ENCODE measurements at regions of chr6 and their contacts with region 1.

Region 1: GRCh38 chr6:33161354-33162331 is 30.6 kb downstream of the COL11A2 start:
- DNase-seq: peak; percentile 93
- H3K4me3 ChIP-seq: peak overlapping the region; percentile 44 to 57
- H3K27ac ChIP-seq: no peak overlapping the region
- H3K4me1 ChIP-seq: peaks cover 0 to 7% of the 10 kb centered on the region in 2 experiments; a peak in 1 of 4 replicates
- H3K27me3 ChIP-seq: no peaks in the 10 kb centered on the region; the same call in 1 of the 2 replicates
- CTCF ChIP-seq: peak; percentile 85
- EP300 ChIP-seq: no peak
- RAD21 ChIP-seq: peak; percentile 68

Region 2: DNA sequence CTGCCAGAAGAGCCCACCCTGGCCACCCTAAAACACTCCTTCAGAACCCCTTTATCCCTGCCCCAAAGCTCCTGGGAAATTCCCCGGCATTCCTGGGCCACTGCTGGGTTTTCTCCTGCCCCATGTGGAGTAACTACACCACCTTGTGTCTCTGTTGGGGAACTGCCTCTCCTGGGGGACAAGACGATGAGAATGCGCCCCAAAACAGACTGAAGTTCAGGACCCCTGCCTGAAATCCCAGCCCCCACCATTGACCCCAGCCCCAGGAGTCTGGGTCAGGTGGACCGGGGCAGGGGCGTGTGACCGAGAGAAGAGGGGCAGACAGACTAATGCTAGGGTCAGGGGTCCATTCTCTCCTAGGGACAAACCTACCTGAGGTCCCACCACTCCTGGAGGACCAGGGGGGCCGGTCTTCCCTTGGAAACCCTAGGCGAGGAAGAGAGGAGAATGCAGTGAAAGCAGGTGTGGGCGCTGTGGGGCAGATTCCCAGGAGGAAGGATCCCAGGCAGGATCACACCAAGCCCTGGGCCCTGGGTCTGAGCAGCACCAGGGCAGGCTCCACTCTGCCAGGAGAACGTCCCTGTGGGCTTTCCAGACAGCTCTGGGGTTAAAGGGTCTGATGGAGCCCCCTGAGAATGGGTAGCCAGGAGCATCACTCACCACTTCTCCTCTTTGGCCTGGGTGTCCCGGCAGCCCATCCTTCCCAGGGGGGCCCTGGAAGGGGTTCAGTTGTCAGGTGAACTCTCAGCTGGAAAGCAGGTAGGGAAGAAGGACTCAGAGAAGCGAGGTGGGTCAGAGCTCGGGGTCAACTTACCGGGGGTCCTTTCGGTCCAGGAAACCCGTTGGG is 11.3 kb after region 1 on chr6:
- CTCF ChIA-PET with region 1: interaction called, 34 read pairs
- POLR2A ChIA-PET with region 1: no interaction called
- DNase-seq: no peak
- H3K4me3 ChIP-seq: no peak overlapping the region
- H3K27ac ChIP-seq: no peak overlapping the region
- H3K4me1 ChIP-seq: peaks cover 0 to 3% of the 10 kb centered on the region in 2 experiments; a peak in 1 of 4 replicates
- H3K27me3 ChIP-seq: no peaks in the 10 kb centered on the region
- CTCF ChIP-seq: peak; percentile 54
- EP300 ChIP-seq: no peak
- RAD21 ChIP-seq: peak; percentile 60

Region 3: GRCh38 chr6:33185654-33186187 is 24.1 kb after region 1 on chr6:
- CTCF ChIA-PET with region 1: interaction called, 14 read pairs
- POLR2A ChIA-PET with region 1: no interaction called
- DNase-seq: no peak
- H3K4me3 ChIP-seq: no peak overlapping the region
- H3K27ac ChIP-seq: no peak overlapping the region
- H3K4me1 ChIP-seq: no peaks in the 10 kb centered on the region; a peak in 1 of 4 replicates
- H3K27me3 ChIP-seq: no peaks in the 10 kb centered on the region
- CTCF ChIP-seq: no peak
- EP300 ChIP-seq: no peak
- RAD21 ChIP-seq: no peak

Region 4: DNA sequence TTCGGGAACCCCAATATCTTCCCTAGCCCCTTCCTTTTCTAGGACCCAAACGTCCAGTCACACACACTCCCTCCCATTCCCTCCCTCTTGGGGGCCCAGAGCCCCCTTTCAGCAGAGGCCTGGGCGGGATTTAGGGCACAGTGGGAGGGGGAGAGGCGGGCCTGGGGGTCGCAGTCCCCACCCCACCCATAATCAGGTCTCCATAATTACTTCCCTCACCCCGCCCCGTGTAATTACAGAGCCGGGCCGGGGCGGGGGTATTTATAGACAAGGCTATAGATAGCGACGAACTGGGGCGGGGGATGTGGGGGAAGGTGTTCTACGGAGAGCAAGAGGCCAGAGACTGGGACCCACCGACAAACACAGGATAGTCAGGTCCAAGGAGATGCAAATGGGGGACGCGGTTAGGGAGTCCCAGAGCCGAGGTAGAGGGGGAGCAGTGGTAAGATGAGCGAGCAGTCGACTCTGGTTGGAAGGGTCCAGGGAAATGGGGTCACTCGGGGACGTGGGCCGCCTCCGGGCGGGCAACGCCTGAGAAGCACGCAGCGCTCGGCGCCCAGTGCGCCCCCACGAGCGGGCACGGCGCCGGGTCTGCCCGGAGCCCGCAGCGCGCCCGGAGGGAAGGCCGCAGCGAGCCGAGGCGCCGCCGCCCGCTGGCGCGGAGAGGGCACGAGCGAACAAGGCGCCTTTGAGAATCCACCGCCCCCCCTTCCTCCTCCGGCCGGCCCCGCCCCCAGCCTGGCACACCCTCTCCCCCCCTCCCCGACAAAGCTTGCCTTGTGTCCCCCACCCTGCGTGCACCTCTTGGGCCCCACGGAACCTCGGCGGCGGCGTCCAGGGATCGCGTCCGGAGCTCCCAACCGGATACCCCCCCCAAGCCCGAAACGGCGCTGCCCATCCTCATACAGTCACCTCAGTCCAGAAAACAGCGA is 31.3 kb after region 1 on chr6:
- CTCF ChIA-PET with region 1: interaction called, 50 read pairs
- POLR2A ChIA-PET with region 1: no interaction called
- DNase-seq: peak; percentile 75
- H3K4me3 ChIP-seq: no peak overlapping the region; a peak in 1 of 4 replicates
- H3K27ac ChIP-seq: no peak overlapping the region
- H3K4me1 ChIP-seq: peaks cover 0 to 22% of the 10 kb centered on the region in 2 experiments; a peak in 1 of 4 replicates
- H3K27me3 ChIP-seq: no peaks in the 10 kb centered on the region
- CTCF ChIP-seq: no peak
- EP300 ChIP-seq: no peak
- RAD21 ChIP-seq: no peak

Region 5: DNA sequence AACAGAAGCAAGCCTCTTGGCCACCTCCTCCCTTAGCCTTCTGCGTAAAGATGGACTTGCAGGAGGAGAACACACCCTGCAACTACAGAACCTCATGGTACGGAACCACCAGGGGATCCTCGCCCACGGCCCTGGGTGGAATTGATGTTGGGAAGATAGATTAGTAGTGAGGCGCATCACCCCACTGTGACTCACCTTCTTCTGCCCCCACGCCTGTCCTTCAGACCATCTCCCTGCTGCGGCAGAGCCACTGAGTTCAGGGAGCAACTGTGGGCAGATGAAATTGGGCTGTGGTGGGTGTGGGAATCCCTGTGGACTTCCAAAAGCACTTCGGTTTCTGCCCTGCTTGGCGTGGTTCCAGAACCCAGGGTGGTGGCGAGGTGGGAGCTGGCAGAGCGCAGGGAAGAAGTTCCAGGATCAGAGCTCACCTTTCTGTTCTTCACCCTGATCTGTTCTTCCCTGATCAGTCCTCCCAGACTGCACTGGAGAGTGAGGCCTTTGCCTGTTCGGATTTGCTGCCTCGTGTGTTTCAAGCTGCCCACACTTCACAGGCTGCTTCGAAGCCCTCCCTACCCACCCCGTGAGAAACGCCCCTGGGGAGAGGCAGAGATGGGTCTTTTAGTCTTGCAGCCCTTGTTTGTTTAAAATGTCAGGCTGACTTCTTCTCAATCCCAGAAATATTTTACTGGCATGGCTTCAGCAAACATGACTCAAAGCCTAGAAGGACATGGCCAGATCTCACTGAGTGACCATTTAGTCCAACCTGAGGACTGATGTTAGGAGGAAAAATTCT is 734.9 kb after region 1 on chr6:
- CTCF ChIA-PET with region 1: no interaction called
- POLR2A ChIA-PET with region 1: no interaction called
- DNase-seq: no peak
- H3K4me3 ChIP-seq: no peak overlapping the region
- H3K27ac ChIP-seq: no peak overlapping the region
- H3K4me1 ChIP-seq: peaks cover 0 to 5% of the 10 kb centered on the region in 2 experiments; a peak in 1 of 4 replicates
- H3K27me3 ChIP-seq: peaks cover 10% of the 10 kb centered on the region; the same call in 1 of the 2 replicates
- CTCF ChIP-seq: no peak
- EP300 ChIP-seq: no peak
- RAD21 ChIP-seq: no peak

Measured in SK-N-SH (cell line).